BJ (cell line): ENCODE measurements at regions of chr9 and their contacts with region 1.

Region 1: DNA sequence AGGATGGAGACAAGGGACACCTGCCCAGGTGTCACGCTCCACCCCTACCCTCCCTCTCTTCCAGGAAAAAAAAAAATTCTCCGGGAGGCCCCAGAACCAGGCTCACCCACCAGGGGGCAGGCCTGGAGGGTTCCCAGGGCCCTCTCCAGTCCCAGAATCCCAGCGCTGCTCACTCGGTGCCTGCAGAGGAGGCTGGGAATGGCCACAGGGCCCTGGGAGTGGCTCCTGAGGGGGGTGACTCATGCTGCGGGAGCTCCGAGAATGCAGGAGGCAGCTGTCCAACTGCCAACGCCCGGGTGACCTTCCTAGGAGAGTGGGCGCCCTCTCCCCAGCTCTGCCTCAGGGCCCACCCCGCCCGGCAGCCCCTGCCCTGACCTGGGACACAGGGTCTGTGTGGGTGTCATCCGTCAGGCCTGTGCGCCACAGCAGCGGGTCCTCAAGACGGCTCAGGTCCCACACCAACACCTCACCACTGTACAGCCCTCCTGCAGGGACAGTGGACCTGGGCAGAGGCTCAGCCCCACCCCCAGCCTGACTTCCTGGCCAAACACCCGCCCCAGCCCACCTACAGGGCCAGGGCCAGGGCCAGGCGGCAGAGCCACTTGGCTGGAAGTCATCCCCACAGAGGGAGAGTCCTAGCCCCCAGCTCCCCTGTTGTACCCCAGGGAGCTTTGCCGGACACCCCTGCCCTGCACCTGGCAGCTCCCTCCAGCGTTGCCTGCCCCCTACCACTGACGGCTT is 21.2 kb downstream of the DYNC2I2 start:
- DNase-seq: peak; percentile 77
- H3K4me3 ChIP-seq: no peak overlapping the region
- H3K27me3 ChIP-seq: no peaks in the 10 kb centered on the region
- CTCF ChIP-seq: peak; percentile 92

Region 2: DNA sequence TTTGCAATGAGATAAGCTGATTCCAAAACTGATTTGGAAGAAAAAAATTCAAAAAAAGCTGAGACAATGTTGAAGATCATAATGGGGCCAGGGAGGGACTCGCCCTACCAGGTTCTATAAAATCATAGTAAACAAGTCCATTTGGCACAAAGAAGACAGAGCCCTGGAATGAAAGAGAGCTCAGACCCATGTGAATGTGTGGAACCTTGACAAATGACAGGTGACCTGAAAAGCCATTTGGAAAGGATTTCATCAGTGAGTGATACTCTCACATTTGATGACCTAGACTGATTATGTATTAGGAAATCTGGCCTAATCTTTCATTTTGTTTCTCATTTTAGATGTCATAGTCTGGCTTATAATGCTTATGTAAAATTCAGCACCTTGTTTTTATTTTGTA is 56.3 kb before region 1 on chr9:
- CTCF ChIA-PET with region 1: interaction called, 3 read pairs
- POLR2A ChIA-PET with region 1: interaction called, 11 read pairs
- DNase-seq: no peak
- H3K4me3 ChIP-seq: no peak overlapping the region
- H3K27me3 ChIP-seq: no peaks in the 10 kb centered on the region
- CTCF ChIP-seq: no peak

Region 3: DNA sequence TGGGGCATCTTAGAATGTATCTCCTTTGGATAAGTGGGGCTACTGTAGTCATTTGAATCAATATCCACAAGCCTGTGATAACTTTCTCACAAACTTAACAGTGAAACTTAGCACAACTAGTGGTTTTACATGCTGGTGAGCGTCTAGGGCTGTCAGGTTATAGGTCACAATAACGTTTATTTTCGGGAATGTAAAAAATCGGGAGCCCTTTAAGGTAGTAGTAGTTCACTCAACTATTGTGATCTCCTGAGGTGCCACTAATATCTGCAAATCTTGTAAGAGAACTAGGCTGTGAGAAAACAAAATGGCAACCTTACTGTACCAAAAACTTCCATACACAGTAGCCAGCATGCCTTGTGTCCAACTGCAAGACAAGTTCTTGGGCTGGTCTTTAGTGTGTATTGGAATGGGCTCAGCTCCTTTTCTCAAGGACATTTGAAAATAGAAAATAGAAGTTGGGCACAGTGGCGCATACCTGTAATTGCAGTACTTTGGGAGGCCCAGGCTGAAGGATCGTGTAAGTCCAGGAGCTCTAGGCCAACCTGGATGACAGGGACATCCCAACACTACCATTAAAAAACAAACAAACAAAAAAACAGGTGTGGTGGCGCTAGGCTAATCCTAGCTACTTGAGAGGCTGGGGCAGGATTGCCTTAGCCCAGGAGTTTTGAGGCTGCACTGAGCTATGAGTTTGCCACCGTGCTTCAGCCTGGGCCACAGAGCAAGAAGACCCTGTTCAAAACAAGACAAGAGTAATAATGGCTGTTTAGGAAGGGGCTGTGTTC is 61.7 kb after region 1 on chr9:
- CTCF ChIA-PET with region 1: interaction called, 11 read pairs
- POLR2A ChIA-PET with region 1: no interaction called
- DNase-seq: no peak
- H3K4me3 ChIP-seq: no peak overlapping the region
- H3K27me3 ChIP-seq: no peaks in the 10 kb centered on the region
- CTCF ChIP-seq: no peak

Region 4: GRCh38 chr9:128710067-128710466 is 74.6 kb after region 1 on chr9:
- CTCF ChIA-PET with region 1: interaction called, 10 read pairs
- POLR2A ChIA-PET with region 1: no interaction called
- DNase-seq: no peak
- H3K4me3 ChIP-seq: no peak overlapping the region
- H3K27me3 ChIP-seq: no peaks in the 10 kb centered on the region
- CTCF ChIP-seq: no peak

Region 5: DNA sequence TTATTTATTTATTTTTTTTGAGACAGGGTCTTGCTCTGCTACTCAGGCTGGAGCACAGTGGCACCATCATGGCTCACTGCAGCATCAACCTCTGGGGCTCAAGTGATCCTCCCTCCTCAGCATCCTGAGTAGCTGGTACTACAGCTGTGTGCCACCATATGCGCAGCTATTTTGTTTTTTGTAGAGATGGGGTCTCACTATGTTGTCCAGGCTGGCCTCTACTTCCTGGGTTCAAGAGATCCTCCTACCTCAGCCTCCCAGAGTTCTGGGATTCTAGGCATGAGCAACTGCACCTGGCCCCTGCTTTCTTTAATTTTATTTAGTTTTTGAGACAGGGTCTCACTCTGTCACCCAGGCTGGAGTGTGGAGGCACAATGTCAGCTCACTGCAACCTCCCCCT is 108.0 kb after region 1 on chr9:
- CTCF ChIA-PET with region 1: interaction called, 3 read pairs
- POLR2A ChIA-PET with region 1: interaction called, 10 read pairs
- DNase-seq: no peak
- H3K4me3 ChIP-seq: no peak overlapping the region
- H3K27me3 ChIP-seq: no peaks in the 10 kb centered on the region
- CTCF ChIP-seq: no peak